ENCODE measurements at regions of chr7 and their contacts with region 1.

Region 1: GRCh38 chr7:66790196-66790595 is 49.7 kb downstream of the RABGEF1 start:
- DNase-seq: no peak
- H3K4me3 ChIP-seq: no peak overlapping the region
- H3K27ac ChIP-seq: no peak overlapping the region
- H3K4me1 ChIP-seq: no peaks in the 10 kb centered on the region
- H3K27me3 ChIP-seq: no peaks in the 10 kb centered on the region
- CTCF ChIP-seq: no peak

Region 2: GRCh38 chr7:66474441-66474840 is 315.8 kb before region 1 on chr7:
- CTCF ChIA-PET with region 1: no interaction called
- POLR2A ChIA-PET with region 1: interaction called, 20 read pairs
- intact Hi-C with region 1: no loop called
- DNase-seq: no peak
- H3K4me3 ChIP-seq: no peak overlapping the region
- H3K27ac ChIP-seq: no peak overlapping the region
- H3K4me1 ChIP-seq: no peaks in the 10 kb centered on the region
- H3K27me3 ChIP-seq: no peaks in the 10 kb centered on the region
- CTCF ChIP-seq: no peak